Activated CD8-positive, alpha-beta T cell treated with anti-CD3 and anti-CD28 coated beads, Interleukin-2, amount 10 ng/mL, durations not matched to agents 7 days and 5 days (primary cell): ENCODE measurements at regions of chr17 and their contacts with region 1.

Region 1: DNA sequence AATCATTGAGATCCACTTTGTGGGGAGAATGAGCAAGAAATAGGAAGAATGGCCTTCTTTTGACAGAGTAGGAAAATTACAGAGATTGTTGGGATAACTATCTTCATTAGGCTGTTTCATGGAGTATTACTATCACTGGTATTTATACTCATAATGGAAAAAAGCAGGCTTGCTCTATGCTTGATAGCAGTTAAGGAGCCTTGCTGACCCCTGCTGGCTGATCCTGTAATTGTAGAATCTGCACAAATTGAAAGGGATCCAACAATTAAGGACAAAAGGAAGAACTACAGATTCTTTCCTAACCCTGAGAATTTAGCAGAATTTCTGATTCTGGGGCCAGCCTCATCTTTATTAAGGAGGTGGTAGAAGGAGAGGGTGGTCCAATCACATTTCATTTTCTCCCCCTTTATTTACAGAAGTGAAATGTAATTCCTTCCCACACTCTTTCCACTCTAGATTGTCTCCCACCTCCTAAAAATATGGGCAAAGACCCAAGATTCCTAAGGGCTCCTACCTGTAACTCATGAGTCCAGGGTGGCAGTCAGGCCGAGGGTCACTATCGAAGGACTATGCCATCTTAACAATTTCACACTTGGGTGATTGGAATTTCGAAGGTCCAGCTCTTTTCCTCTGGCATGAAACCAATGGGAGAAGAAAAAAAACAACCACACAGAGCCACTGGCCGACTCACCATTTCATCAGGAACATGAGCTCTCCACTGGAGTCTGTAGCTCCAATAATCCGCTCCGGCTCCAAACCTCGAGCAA is 26.3 kb downstream of the NFE2L1 start:
- DNase-seq: peak; percentile 82
- ATAC-seq: peak; percentile 71
- H3K4me3 Mint-ChIP-seq: no peak overlapping the region
- H3K27ac Mint-ChIP-seq: no peak overlapping the region
- H3K4me1 Mint-ChIP-seq: no peaks in the 10 kb centered on the region
- H3K27me3 Mint-ChIP-seq: no peaks in the 10 kb centered on the region

Region 2: GRCh38 chr17:48037036-48037837 is 37.3 kb before region 1 on chr17 and contains the start of gene COPZ2:
- CTCF ChIA-PET with region 1: interaction called, 24 read pairs
- POLR2A ChIA-PET with region 1: no interaction called
- DNase-seq: peak; percentile 72
- ATAC-seq: peak; percentile 89
- H3K4me3 Mint-ChIP-seq: peak within 1 kb of the TSS; percentile 76
- H3K27ac Mint-ChIP-seq: peak within 1 kb of the TSS; percentile 53
- H3K4me1 Mint-ChIP-seq: peaks cover 15% of the 10 kb centered on the region
- H3K27me3 Mint-ChIP-seq: peaks cover 39% of the 10 kb centered on the region
- total RNA-seq, gene COPZ2: 5.1 to 5.5 TPM

Region 3: DNA sequence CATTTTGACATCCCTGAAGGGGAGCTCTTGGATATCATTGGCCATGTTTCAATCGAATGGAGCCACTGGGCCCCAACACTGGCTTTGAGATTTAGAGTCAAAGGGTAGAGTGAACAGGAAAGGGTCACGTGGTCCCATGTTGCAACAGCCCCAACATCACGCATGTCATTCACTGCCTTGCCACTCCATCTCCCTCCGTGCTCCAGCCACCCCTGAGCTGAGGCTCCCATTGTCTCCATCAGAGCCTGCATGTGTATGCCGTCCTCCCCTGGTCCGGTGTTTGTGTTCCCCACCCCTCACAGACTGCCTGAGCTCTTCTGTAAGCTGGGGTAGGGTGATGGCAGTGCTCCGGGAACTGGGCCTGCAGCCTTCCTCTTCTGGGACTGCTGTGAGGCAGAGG is 14.2 kb before region 1 on chr17:
- CTCF ChIA-PET with region 1: interaction called, 28 read pairs
- POLR2A ChIA-PET with region 1: interaction called, 3 read pairs
- DNase-seq: no peak
- ATAC-seq: no peak
- H3K4me3 Mint-ChIP-seq: no peak overlapping the region
- H3K27ac Mint-ChIP-seq: no peak overlapping the region
- H3K4me1 Mint-ChIP-seq: peaks cover 14% of the 10 kb centered on the region
- H3K27me3 Mint-ChIP-seq: no peaks in the 10 kb centered on the region

Region 4: GRCh38 chr17:48107168-48108132 is 33.0 kb after region 1 on chr17 and contains the start of gene SNX11:
- CTCF ChIA-PET with region 1: interaction called, 30 read pairs
- POLR2A ChIA-PET with region 1: interaction called, 5 read pairs
- DNase-seq: peak; percentile 94
- ATAC-seq: peak; percentile 95
- H3K4me3 Mint-ChIP-seq: peak within 1 kb of the TSS; percentile 99
- H3K27ac Mint-ChIP-seq: peak within 1 kb of the TSS; percentile 98
- H3K4me1 Mint-ChIP-seq: peaks cover 67% of the 10 kb centered on the region
- H3K27me3 Mint-ChIP-seq: no peaks in the 10 kb centered on the region
- total RNA-seq, gene SNX11: 33.3 to 34.2 TPM